ENCODE measurements at regions of chrX and their contacts with region 1.

Region 1: GRCh38 chrX:110086916-110087484 is 84.1 kb downstream of the TMEM164 start:
- DNase-seq: peak; percentile 96
- ATAC-seq: peak; percentile 71
- H3K4me3 ChIP-seq: no peak overlapping the region
- H3K27ac ChIP-seq: peak overlapping the region; percentile 99
- H3K4me1 ChIP-seq: peaks cover 7% of the 10 kb centered on the region
- H3K27me3 ChIP-seq: no peaks in the 10 kb centered on the region
- CTCF ChIP-seq: no peak
- POLR2A ChIP-seq: no peak
- RAD21 ChIP-seq: no peak

Region 2: GRCh38 chrX:109695637-109696036 is 391.4 kb before region 1 on chrX:
- CTCF ChIA-PET with region 1: no interaction called
- POLR2A ChIA-PET with region 1: no interaction called
- dilution Hi-C with region 1: no loop called
- in situ Hi-C with region 1: no loop called
- intact Hi-C with region 1: no loop called
- DNase-seq: no peak
- ATAC-seq: no peak
- H3K4me3 ChIP-seq: no peak overlapping the region
- H3K27ac ChIP-seq: no peak overlapping the region
- H3K4me1 ChIP-seq: peaks cover 2% of the 10 kb centered on the region
- H3K27me3 ChIP-seq: peaks cover 1% of the 10 kb centered on the region; the same call in 1 of the 2 replicates
- CTCF ChIP-seq: no peak
- POLR2A ChIP-seq: no peak
- RAD21 ChIP-seq: no peak

Region 3: DNA sequence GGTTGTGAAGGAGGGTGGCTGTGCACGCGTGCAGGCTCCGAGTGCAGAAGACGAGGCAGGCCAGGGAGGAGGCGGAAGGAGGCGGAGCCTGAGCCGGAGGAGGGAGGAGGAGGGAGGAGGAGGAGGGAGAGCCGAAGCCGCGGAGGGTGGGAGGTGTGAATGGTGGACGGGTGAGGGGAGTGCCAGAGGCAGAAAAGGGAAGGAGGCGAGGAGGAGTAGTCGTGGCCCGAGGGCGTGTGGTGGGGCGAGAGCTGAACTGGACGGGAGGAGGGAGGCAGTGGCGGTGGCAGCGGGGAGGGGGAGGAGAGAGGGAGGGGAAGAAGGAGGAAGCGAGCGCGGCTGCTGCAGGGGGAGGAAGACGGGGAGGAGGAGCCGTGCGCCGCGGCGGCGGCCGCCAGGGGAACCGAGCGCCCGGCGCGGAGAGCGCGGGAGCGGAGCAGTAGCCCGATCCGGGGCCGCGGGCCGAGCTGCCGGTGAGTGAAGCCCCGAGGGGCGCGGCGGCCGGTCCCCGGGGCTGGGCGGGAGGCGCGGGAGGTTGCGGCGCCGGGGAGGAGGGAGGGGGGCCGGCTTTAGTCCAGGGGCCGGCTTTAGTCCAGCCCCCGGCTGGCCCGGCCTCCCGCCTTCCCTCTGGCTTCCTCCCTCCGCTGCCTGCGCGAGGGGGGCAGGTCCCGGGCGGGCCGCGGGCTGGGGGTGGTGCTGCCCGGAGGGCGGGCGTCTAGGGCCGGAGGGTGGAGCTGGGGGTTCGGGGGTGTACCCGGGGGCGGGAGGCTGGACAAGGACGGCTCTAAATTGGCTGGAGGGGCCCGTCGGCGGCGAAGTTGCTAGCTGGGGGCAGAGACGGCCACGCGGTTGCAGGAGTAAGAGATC is 84.5 kb before region 1 on chrX and contains the start of gene TMEM164:
- CTCF ChIA-PET with region 1: no interaction called
- POLR2A ChIA-PET with region 1: no interaction called
- dilution Hi-C with region 1: no loop called
- in situ Hi-C with region 1: no loop called
- intact Hi-C with region 1: loop called (anchors 2 kb)
- DNase-seq: peak; percentile 66
- ATAC-seq: peak; percentile 95
- H3K4me3 ChIP-seq: peak within 1 kb of the TSS; percentile 95
- H3K27ac ChIP-seq: peak within 1 kb of the TSS; percentile 100
- H3K4me1 ChIP-seq: no peaks in the 10 kb centered on the region
- H3K27me3 ChIP-seq: peaks cover 3% of the 10 kb centered on the region; the same call in 1 of the 2 replicates
- CTCF ChIP-seq: no peak
- POLR2A ChIP-seq: 0 out of 2 replicates have a peak, but pooled peaks have one; percentile 24
- RAD21 ChIP-seq: no peak
- total RNA-seq, gene TMEM164: 5.0 and 6.3 TPM in 2 replicates

Measured in IMR-90 (cell line).